ENCODE measurements at regions of chr6 and their contacts with region 1.

Region 1: DNA sequence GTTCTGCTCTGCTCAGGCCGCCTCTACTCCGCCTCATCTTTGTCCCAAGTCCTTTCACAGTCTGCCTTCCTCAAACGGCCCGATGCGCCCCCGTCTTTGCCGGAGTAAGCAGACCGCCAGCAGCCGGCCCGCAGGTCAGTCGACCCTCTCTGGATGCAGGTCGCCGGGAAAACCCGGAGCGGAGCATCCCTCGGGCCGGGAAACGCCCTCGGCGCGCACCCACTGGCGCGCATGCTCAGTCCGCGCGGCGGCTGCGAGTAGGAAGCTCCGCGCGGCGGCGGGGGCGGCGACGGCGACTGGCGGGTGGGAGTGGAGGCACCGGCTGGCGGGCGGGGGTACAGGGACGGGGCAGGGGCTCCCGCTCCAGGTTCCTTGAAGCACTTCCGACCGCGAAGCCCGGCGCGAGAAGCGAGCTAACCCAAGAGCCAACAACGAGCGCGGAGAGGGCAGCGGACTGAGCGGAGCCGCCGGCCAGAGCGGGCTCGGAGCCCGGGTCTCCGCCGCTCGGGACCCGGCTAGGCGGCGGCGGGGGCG is at the start of gene LRRC1:
- DNase-seq: peak; percentile 89 to 96 (median 91)
- H3K4me3 ChIP-seq: peak within 1 kb of the TSS; percentile 92
- H3K27ac ChIP-seq: peak within 1 kb of the TSS; percentile 55 to 72
- H3K4me1 ChIP-seq: peaks cover 6% of the 10 kb centered on the region
- H3K27me3 ChIP-seq: no peaks in the 10 kb centered on the region
- CTCF ChIP-seq: peak in 1 of 3 donors; percentile 2
- EP300 ChIP-seq: no peak
- POLR2A ChIP-seq: peak; percentile 40
- total RNA-seq, gene LRRC1: 4.9 to 20.6 (median 10.2) TPM

Region 2: DNA sequence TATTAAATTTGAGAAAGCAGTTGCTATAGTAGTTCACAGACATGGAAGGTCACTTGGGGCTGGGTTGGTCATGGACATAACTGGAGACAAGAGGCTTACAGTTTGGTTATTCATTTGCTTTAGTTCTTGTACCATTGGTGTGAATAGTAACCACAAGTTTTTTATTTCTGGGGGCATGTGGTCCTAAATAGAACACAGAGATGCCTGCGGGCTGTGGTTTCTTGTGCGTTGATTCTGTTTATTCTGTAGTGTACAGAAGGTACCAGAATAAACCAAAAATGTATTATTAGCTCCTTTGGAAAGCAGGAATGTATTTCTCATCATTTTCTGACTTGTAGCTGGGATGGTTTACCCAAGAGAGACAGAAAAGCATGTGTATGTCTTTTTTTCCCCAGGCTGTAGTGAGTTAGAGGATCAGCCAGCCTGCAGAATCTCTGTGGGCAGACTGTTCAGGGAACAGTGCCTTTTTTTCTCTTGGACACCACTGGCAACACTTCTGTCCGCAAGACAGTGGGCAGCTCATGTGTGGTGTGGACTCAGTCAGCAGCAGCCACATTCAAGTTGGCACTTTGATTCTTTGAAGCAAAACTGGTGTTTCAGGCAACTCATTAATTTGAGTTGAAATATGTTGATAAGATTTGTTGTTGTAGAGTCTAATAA is 122.1 kb after region 1 on chr6:
- intact Hi-C with region 1: loop called in 1 of 4 experiments (anchors 10 kb)
- DNase-seq: no peak
- H3K4me3 ChIP-seq: no peak overlapping the region
- H3K27ac ChIP-seq: no peak overlapping the region
- H3K4me1 ChIP-seq: peaks cover 2% of the 10 kb centered on the region
- H3K27me3 ChIP-seq: no peaks in the 10 kb centered on the region
- CTCF ChIP-seq: no peak
- EP300 ChIP-seq: no peak
- POLR2A ChIP-seq: no peak

Region 3: GRCh38 chr6:53943395-53943794 is 148.6 kb after region 1 on chr6:
- intact Hi-C with region 1: loop called in 1 of 4 experiments (anchors 10 kb)
- DNase-seq: peak in 4 of 5 donors; percentile 40 to 74 (median 50)
- H3K4me3 ChIP-seq: no peak overlapping the region
- H3K27ac ChIP-seq: no peak overlapping the region
- H3K4me1 ChIP-seq: peaks cover 7% of the 10 kb centered on the region
- H3K27me3 ChIP-seq: no peaks in the 10 kb centered on the region
- CTCF ChIP-seq: no peak
- EP300 ChIP-seq: no peak
- POLR2A ChIP-seq: no peak

Region 4: GRCh38 chr6:53956068-53956711 is 161.4 kb after region 1 on chr6:
- intact Hi-C with region 1: loop called in 1 of 4 experiments (anchors 10 kb)
- DNase-seq: peak; percentile 51 to 68 (median 59)
- H3K4me3 ChIP-seq: no peak overlapping the region
- H3K27ac ChIP-seq: no peak overlapping the region
- H3K4me1 ChIP-seq: no peaks in the 10 kb centered on the region
- H3K27me3 ChIP-seq: no peaks in the 10 kb centered on the region
- CTCF ChIP-seq: peak in 2 of 3 donors; percentile 16 to 26
- EP300 ChIP-seq: no peak
- POLR2A ChIP-seq: no peak

Measured in ovary (tissue), 10 donors.